Ovary (tissue), 10 donors: ENCODE measurements at regions of chr10 and their contacts with region 1.

Region 1: GRCh38 chr10:36779234-36779846 is 346.1 kb upstream of the ANKRD30A start:
- DNase-seq: peak in 3 of 5 donors; percentile 13 to 36 (median 28)
- H3K4me3 ChIP-seq: no peak overlapping the region
- H3K27ac ChIP-seq: no peak overlapping the region
- H3K4me1 ChIP-seq: no peaks in the 10 kb centered on the region
- H3K27me3 ChIP-seq: no peaks in the 10 kb centered on the region
- CTCF ChIP-seq: peak in 2 of 3 donors; percentile 44 to 68
- EP300 ChIP-seq: no peak
- POLR2A ChIP-seq: no peak

Region 2: GRCh38 chr10:35635576-35635975 is 1143.8 kb before region 1 on chr10:
- intact Hi-C with region 1: loop called in 3 of 4 experiments (anchors 5 to 10 kb)
- DNase-seq: peak in 2 of 5 donors; percentile 16 to 48
- H3K4me3 ChIP-seq: no peak overlapping the region
- H3K27ac ChIP-seq: no peak overlapping the region
- H3K4me1 ChIP-seq: peaks cover 7% of the 10 kb centered on the region
- H3K27me3 ChIP-seq: no peaks in the 10 kb centered on the region
- CTCF ChIP-seq: peak; percentile 62 to 83 (median 76)
- EP300 ChIP-seq: no peak
- POLR2A ChIP-seq: no peak